Tibial artery (tissue), 4 donors: ENCODE measurements at regions of chr15 and their contacts with region 1.

Region 1: GRCh38 chr15:78811124-78811824 is at the start of gene ADAMTS7:
- DNase-seq: peak; percentile 58 to 84
- H3K4me3 ChIP-seq: peak within 1 kb of the TSS; percentile 64 to 80
- H3K27ac ChIP-seq: peak within 1 kb of the TSS; percentile 73 to 81
- H3K4me1 ChIP-seq: peaks cover 0 to 23% (median 16%) of the 10 kb centered on the region in 4 donors
- H3K27me3 ChIP-seq: no peaks in the 10 kb centered on the region
- CTCF ChIP-seq: peak; percentile 57 to 64

Region 2: DNA sequence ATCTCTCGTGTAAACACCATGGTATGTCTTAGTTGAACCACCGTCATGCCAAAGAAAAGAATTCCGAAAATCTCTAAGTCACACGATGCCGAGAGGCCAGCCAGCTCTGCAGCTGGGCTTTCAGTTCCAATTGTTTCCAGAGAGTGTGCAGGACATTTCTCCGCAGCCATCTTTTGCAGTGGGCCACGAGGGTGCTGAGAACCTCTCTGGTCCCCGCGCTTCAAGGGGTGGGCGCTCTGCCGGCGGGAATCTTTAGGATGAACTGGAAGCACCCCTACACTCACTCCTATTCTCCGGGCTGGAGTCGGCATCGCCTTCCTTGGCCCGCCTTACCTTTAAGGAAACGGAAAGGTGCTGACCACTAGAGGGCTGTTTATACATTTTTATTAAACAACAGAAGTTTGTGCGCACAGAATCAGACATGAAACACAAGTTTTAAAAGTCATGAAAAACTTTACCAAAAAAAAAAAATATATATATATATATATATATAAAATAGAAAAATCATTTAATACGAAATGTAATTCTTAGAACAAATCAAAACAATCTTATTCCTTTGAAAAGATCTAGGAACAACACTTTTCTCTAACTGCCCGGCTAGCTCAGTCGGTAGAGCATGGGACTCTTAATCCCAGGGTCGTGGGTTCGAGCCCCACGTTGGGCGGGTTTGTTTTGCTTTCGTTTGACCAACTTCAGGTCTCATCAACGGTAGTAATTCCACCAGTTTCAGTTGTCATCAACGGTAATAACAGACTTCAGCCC is 48.9 kb after region 1 on chr15:
- intact Hi-C with region 1: loop called (anchors 5 kb)
- DNase-seq: peak; percentile 65 to 78
- H3K4me3 ChIP-seq: peak overlapping the region; percentile 53 to 54
- H3K27ac ChIP-seq: peak overlapping the region; percentile 64 to 84
- H3K4me1 ChIP-seq: peaks cover 0 to 26% (median 7%) of the 10 kb centered on the region in 4 donors
- H3K27me3 ChIP-seq: no peaks in the 10 kb centered on the region
- CTCF ChIP-seq: peak; percentile 39 to 62